Activated CD4-positive, alpha-beta memory T cell treated with anti-CD3 and anti-CD28 coated beads for 36 hours (primary cell): ENCODE measurements at regions of chr17 and their contacts with region 1.

Region 1: GRCh38 chr17:45021607-45022287 is 29.7 kb downstream of the DCAKD start:
- DNase-seq: peak; percentile 71
- H3K4me3 Mint-ChIP-seq: peak overlapping the region; percentile 12
- H3K27ac Mint-ChIP-seq: no peak overlapping the region
- H3K4me1 Mint-ChIP-seq: peaks cover 16% of the 10 kb centered on the region
- H3K27me3 Mint-ChIP-seq: peaks cover 35% of the 10 kb centered on the region

Region 2: DNA sequence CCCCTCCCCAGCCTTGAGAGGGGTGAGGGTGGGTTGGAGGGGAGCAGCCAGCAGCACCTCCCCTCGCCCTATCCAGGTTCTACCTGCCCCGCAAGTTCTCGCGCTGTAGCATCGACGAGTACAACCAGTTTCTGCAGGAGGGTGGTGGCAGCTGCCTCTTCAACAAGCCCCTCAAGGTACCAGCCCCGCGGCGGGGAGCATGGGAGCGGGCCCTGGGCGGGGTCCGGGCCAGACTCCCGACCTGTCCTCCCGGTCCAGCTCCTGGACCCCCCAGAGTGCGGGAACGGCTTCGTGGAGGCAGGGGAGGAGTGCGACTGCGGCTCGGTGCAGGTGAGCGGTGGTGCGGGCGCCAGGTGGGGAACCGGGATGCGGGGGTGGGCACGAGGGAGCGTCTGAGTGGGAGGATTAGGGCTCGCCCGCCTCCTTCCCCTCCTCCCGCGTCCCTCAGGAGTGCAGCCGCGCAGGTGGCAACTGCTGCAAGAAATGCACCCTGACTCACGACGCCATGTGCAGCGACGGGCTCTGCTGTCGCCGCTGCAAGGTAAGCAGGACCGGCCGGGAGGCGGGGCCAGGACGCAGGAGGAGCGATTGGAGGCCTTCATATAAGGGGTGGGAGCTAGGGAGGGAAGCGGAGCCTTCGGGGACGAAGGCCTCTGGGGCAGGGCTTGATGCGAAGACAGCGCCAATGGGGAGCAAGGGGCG is 246.5 kb before region 1 on chr17:
- CTCF ChIA-PET with region 1: interaction called, 10 read pairs
- POLR2A ChIA-PET with region 1: no interaction called
- intact Hi-C with region 1: loop called (anchors 5 kb)
- DNase-seq: no peak
- H3K4me3 Mint-ChIP-seq: peak overlapping the region; percentile 80
- H3K27ac Mint-ChIP-seq: peak overlapping the region; percentile 42
- H3K4me1 Mint-ChIP-seq: peaks cover 5% of the 10 kb centered on the region
- H3K27me3 Mint-ChIP-seq: peaks cover 5% of the 10 kb centered on the region

Region 3: GRCh38 chr17:44899069-44899782 is 122.5 kb before region 1 on chr17 and contains the start of gene EFTUD2:
- CTCF ChIA-PET with region 1: interaction called, 8 read pairs
- POLR2A ChIA-PET with region 1: no interaction called
- intact Hi-C with region 1: loop called (anchors 5 kb)
- DNase-seq: peak; percentile 94
- H3K4me3 Mint-ChIP-seq: peak within 1 kb of the TSS; percentile 87
- H3K27ac Mint-ChIP-seq: peak within 1 kb of the TSS; percentile 99
- H3K4me1 Mint-ChIP-seq: peaks cover 22% of the 10 kb centered on the region
- H3K27me3 Mint-ChIP-seq: no peaks in the 10 kb centered on the region
- total RNA-seq, gene EFTUD2: 162 to 171 TPM

Region 4: GRCh38 chr17:44919885-44920564 is 101.7 kb before region 1 on chr17:
- CTCF ChIA-PET with region 1: interaction called, 162 read pairs
- POLR2A ChIA-PET with region 1: interaction called, 12 read pairs
- intact Hi-C with region 1: loop called (anchors 1 kb)
- DNase-seq: peak; percentile 85
- H3K4me3 Mint-ChIP-seq: no peak overlapping the region
- H3K27ac Mint-ChIP-seq: no peak overlapping the region
- H3K4me1 Mint-ChIP-seq: peaks cover 5% of the 10 kb centered on the region
- H3K27me3 Mint-ChIP-seq: peaks cover 10% of the 10 kb centered on the region

Region 5: GRCh38 chr17:44970136-44970737 is 51.5 kb before region 1 on chr17:
- CTCF ChIA-PET with region 1: interaction called, 18 read pairs
- POLR2A ChIA-PET with region 1: no interaction called
- intact Hi-C with region 1: loop called (anchors 2 kb)
- DNase-seq: peak; percentile 49
- H3K4me3 Mint-ChIP-seq: peak overlapping the region; percentile 26
- H3K27ac Mint-ChIP-seq: no peak overlapping the region
- H3K4me1 Mint-ChIP-seq: peaks cover 37% of the 10 kb centered on the region
- H3K27me3 Mint-ChIP-seq: peaks cover 46% of the 10 kb centered on the region

Region 6: GRCh38 chr17:45098869-45099616 is 77.3 kb after region 1 on chr17:
- CTCF ChIA-PET with region 1: interaction called, 13 read pairs
- POLR2A ChIA-PET with region 1: no interaction called
- intact Hi-C with region 1: no loop called
- DNase-seq: peak; percentile 85
- H3K4me3 Mint-ChIP-seq: no peak overlapping the region
- H3K27ac Mint-ChIP-seq: no peak overlapping the region
- H3K4me1 Mint-ChIP-seq: no peaks in the 10 kb centered on the region
- H3K27me3 Mint-ChIP-seq: no peaks in the 10 kb centered on the region